A549 (cell line): ENCODE measurements at regions of chr17 and their contacts with region 1.

Region 1: DNA sequence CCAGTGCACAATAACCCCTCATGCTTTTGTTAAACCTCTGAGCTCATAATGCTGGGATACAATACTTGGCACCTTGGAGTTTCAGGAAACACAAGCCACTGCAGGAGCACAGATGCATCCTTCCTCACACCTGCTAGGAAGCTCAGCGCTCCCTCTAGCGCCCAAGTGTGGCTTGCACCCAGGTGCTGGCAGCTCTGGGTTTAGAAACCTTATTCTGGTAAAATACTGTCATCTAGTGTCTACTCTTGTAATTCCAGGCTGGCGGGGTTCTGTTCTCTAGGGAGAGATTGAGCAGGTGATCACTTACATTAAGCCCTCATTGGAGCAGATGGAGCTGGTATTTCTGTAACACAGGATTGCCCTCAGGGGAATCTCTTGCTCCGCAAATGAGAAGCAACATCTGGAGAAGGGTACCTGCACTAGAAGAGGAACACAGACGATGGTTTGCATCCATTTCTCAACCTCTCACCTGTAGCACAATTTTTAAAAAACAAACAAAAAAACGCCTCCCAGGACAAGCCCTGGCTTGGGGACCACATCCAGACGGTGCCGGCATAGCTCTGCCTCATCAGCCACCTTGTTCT is 1.5 kb downstream of the CCL1 start:
- DNase-seq: peak; percentile 90 to 91
- ATAC-seq: peak; percentile 90 to 98
- H3K4me3 ChIP-seq: no peak overlapping the region
- H3K27ac ChIP-seq: no peak overlapping the region
- H3K4me1 ChIP-seq: no peaks in the 10 kb centered on the region
- CTCF ChIP-seq: peak; percentile 100
- EP300 ChIP-seq: no peak
- POLR2A ChIP-seq: no peak
- RAD21 ChIP-seq: peak; percentile 99 to 100

Region 2: GRCh38 chr17:34171245-34171818 is 190.2 kb before region 1 on chr17:
- CTCF ChIA-PET with region 1: interaction called, 83 read pairs
- POLR2A ChIA-PET with region 1: interaction called, 3 read pairs
- DNase-seq: peak; percentile 60 to 68
- ATAC-seq: peak; percentile 68 to 97; a peak in 4 of 6 replicates
- H3K4me3 ChIP-seq: no peak overlapping the region
- H3K27ac ChIP-seq: no peak overlapping the region
- H3K4me1 ChIP-seq: no peaks in the 10 kb centered on the region
- CTCF ChIP-seq: peak; percentile 63
- EP300 ChIP-seq: no peak
- POLR2A ChIP-seq: no peak
- RAD21 ChIP-seq: peak; percentile 32 to 60; a peak in 4 of 5 replicates

Region 3: DNA sequence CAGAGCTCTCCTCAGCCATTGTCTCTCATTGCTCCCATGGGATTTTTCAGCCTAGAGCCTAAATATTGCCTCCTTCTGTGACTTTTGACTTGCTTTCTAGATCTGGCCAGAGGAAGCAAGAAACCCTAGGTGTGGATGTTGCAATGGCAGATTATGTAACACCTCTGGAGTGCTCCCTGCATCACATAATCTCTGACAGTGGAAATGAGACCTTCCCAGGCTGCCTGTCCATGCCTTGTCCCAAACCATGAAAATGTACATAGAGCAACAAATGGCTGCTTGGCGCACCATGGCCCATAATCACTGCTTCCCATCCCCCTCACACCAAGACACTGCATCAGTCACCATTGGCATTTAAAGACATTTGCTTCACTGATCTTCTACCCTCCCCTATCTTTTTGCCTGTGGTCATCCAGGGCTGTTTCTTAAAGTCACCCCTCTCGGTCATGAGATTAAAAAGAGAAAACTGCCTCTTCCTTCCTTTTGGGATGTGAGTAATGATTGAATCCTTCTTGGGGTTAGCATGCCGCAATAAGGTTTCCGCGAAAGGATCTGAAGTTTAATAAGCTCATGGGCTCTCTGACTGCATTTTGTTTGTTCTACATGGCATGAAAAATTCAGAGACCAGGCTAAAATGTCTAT is 140.7 kb before region 1 on chr17:
- CTCF ChIA-PET with region 1: interaction called, 25 read pairs
- POLR2A ChIA-PET with region 1: no interaction called
- DNase-seq: no peak
- ATAC-seq: no peak
- H3K4me3 ChIP-seq: no peak overlapping the region
- H3K27ac ChIP-seq: no peak overlapping the region
- H3K4me1 ChIP-seq: no peaks in the 10 kb centered on the region
- CTCF ChIP-seq: no peak
- EP300 ChIP-seq: no peak
- POLR2A ChIP-seq: no peak
- RAD21 ChIP-seq: no peak

Region 4: GRCh38 chr17:34275881-34276280 is 85.7 kb before region 1 on chr17:
- CTCF ChIA-PET with region 1: interaction called, 10 read pairs
- POLR2A ChIA-PET with region 1: no interaction called
- DNase-seq: peak in 1 of 2 experiments; percentile 51
- ATAC-seq: peak; percentile 54 to 78; a peak in 4 of 6 replicates
- H3K4me3 ChIP-seq: no peak overlapping the region
- H3K27ac ChIP-seq: no peak overlapping the region
- H3K4me1 ChIP-seq: peaks cover 10% of the 10 kb centered on the region; the same call in 2 of the 3 replicates
- CTCF ChIP-seq: no peak
- EP300 ChIP-seq: no peak
- POLR2A ChIP-seq: no peak
- RAD21 ChIP-seq: no peak

Region 5: DNA sequence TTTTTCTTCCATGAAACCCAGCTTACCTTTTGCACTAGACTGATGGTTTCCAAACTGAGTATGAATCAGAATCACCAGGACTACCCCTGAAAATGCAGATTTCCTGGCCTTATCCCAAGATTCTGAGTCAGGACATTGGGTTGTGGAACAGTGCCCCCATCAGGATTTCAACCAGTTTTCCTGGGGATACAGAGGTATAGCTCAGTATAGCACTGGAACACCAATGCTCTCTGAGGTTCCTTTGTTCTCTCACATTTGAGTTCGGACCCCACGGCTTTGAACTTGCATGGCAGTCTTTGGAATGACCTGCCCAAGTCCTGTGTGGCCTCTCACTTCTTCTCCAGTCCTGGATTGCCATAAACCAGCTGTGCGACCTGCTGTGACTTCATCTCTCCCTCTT is 55.1 kb before region 1 on chr17:
- CTCF ChIA-PET with region 1: interaction called, 13 read pairs
- POLR2A ChIA-PET with region 1: no interaction called
- DNase-seq: peak; percentile 22 to 38
- ATAC-seq: peak; percentile 82 to 94
- H3K4me3 ChIP-seq: no peak overlapping the region
- H3K27ac ChIP-seq: no peak overlapping the region; a peak in 1 of 6 replicates
- H3K4me1 ChIP-seq: 0 out of 3 replicates have a peak, but pooled peaks cover 4% of the 10 kb centered on the region
- CTCF ChIP-seq: peak; percentile 60
- EP300 ChIP-seq: no peak
- POLR2A ChIP-seq: no peak
- RAD21 ChIP-seq: peak; percentile 73 to 83

Region 6: GRCh38 chr17:34347063-34347462 is 14.5 kb before region 1 on chr17:
- CTCF ChIA-PET with region 1: interaction called, 66 read pairs
- POLR2A ChIA-PET with region 1: no interaction called
- DNase-seq: no peak
- ATAC-seq: 0 out of 6 replicates have a peak, but pooled peaks of 1 of the 2 experiments have one; percentile 30
- H3K4me3 ChIP-seq: no peak overlapping the region
- H3K27ac ChIP-seq: no peak overlapping the region
- H3K4me1 ChIP-seq: no peaks in the 10 kb centered on the region
- CTCF ChIP-seq: no peak
- EP300 ChIP-seq: no peak
- POLR2A ChIP-seq: no peak
- RAD21 ChIP-seq: no peak

Region 7: GRCh38 chr17:34398990-34399389 is 37.4 kb after region 1 on chr17:
- CTCF ChIA-PET with region 1: interaction called, 21 read pairs
- POLR2A ChIA-PET with region 1: no interaction called
- DNase-seq: no peak
- ATAC-seq: no peak
- H3K4me3 ChIP-seq: no peak overlapping the region
- H3K27ac ChIP-seq: no peak overlapping the region
- H3K4me1 ChIP-seq: no peaks in the 10 kb centered on the region
- CTCF ChIP-seq: no peak
- EP300 ChIP-seq: no peak
- POLR2A ChIP-seq: no peak
- RAD21 ChIP-seq: no peak